Motor neuron (in vitro differentiated cells): ENCODE measurements at regions of chrX and their contacts with region 1.

Region 1: GRCh38 chrX:16436348-16437188 is 213.4 kb upstream of the S100G start:
- ATAC-seq: peak; percentile 50 to 95 (median 76)
- H3K4me3 ChIP-seq: no peak overlapping the region
- H3K27ac ChIP-seq: no peak overlapping the region
- H3K4me1 ChIP-seq: no peaks in the 10 kb centered on the region

Region 2: GRCh38 chrX:16123222-16123786 is 313.3 kb before region 1 on chrX and contains the start of gene GRPR:
- in situ Hi-C with region 1: loop called in 1 of 9 experiments (anchors 25 kb)
- ATAC-seq: peak; percentile 94 to 100 (median 99)
- H3K4me3 ChIP-seq: no peak within 1 kb of the TSS
- H3K27ac ChIP-seq: no peak within 1 kb of the TSS
- H3K4me1 ChIP-seq: no peaks in the 10 kb centered on the region
- total RNA-seq, gene GRPR: 0.14 to 31.6 (median 0.57) TPM

Region 3: DNA sequence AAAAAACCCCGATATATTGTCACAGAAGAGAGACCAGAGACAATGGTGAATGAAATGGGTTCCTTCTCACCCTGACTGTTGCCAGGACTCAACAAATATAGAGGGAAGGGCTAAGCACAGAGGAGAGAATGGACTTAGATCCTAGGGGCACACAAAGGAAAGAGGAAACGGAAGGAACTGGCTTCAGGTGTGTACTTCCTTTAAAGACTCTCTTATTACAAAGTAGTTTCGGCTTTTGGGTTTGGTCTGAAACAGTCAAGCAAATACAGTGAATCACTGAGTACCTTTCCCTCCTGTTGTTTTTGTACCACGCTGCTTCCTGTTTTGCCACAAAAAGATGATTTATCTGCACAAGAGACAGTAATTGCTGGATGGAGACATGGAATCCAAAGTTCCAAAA is 167.3 kb after region 1 on chrX:
- in situ Hi-C with region 1: no loop called
- ATAC-seq: no peak
- H3K4me3 ChIP-seq: no peak overlapping the region
- H3K27ac ChIP-seq: no peak overlapping the region
- H3K4me1 ChIP-seq: no peaks in the 10 kb centered on the region

Region 4: GRCh38 chrX:16670998-16671397 is 234.4 kb after region 1 on chrX:
- in situ Hi-C with region 1: loop called in 2 of 9 experiments (anchors 25 kb)
- ATAC-seq: peak in 4 of 8 experiments; percentile 34 to 74 (median 68)
- H3K4me3 ChIP-seq: no peak overlapping the region
- H3K27ac ChIP-seq: no peak overlapping the region
- H3K4me1 ChIP-seq: no peaks in the 10 kb centered on the region